Spleen (tissue), 13 donors: ENCODE measurements at regions of chr7 and their contacts with region 1.

Region 1: GRCh38 chr7:16571941-16572340 is 45.3 kb downstream of the LRRC72 start:
- DNase-seq: no peak
- H3K4me3 ChIP-seq: no peak overlapping the region
- H3K27ac ChIP-seq: no peak overlapping the region
- H3K4me1 ChIP-seq: no peaks in the 10 kb centered on the region
- H3K27me3 ChIP-seq: no peaks in the 10 kb centered on the region
- CTCF ChIP-seq: no peak
- POLR2A ChIP-seq: no peak

Region 2: GRCh38 chr7:16078076-16078952 is 493.6 kb before region 1 on chr7:
- intact Hi-C with region 1: loop called (anchors 5 kb)
- DNase-seq: no peak
- H3K4me3 ChIP-seq: no peak overlapping the region
- H3K27ac ChIP-seq: no peak overlapping the region
- H3K4me1 ChIP-seq: no peaks in the 10 kb centered on the region
- H3K27me3 ChIP-seq: no peaks in the 10 kb centered on the region
- CTCF ChIP-seq: peak in 7 of 11 experiments; percentile 41 to 70 (median 51)
- POLR2A ChIP-seq: no peak